GM12878 (cell line): ENCODE measurements at regions of chr16 and their contacts with region 1.

Region 1: GRCh38 chr16:65117811-65118448 is 3.9 kb downstream of the CDH11 start:
- DNase-seq: peak; percentile 2
- ATAC-seq: peak; percentile 88
- H3K4me3 ChIP-seq: no peak overlapping the region
- H3K27ac ChIP-seq: no peak overlapping the region
- H3K4me1 ChIP-seq: no peaks in the 10 kb centered on the region
- H3K27me3 ChIP-seq: no peaks in the 10 kb centered on the region; a peak in 2 of 4 replicates
- CTCF ChIP-seq: peak; percentile 91 to 94 (median 92)
- EP300 ChIP-seq: no peak
- POLR2A ChIP-seq: no peak
- RAD21 ChIP-seq: peak; percentile 89

Region 2: GRCh38 chr16:64089697-64090096 is 1028.2 kb before region 1 on chr16:
- CTCF ChIA-PET with region 1: interaction called, 3 read pairs
- POLR2A ChIA-PET with region 1: no interaction called
- RAD21 ChIA-PET with region 1: no interaction called
- SMC1A ChIA-PET with region 1: no interaction called
- in situ Hi-C with region 1: loop called (anchors 25 kb)
- intact Hi-C with region 1: loop called (anchors 5 kb)
- DNase-seq: no peak
- ATAC-seq: peak; percentile 66
- H3K4me3 ChIP-seq: no peak overlapping the region
- H3K27ac ChIP-seq: no peak overlapping the region
- H3K4me1 ChIP-seq: no peaks in the 10 kb centered on the region
- H3K27me3 ChIP-seq: no peaks in the 10 kb centered on the region
- CTCF ChIP-seq: peak in 2 of 3 experiments; percentile 24 to 38; a peak in 3 of 6 replicates
- EP300 ChIP-seq: no peak
- POLR2A ChIP-seq: no peak
- RAD21 ChIP-seq: peak; percentile 22; the same call in 1 of the 2 replicates

Region 3: GRCh38 chr16:64892835-64893785 is 224.8 kb before region 1 on chr16:
- CTCF ChIA-PET with region 1: no interaction called
- POLR2A ChIA-PET with region 1: no interaction called
- RAD21 ChIA-PET with region 1: no interaction called
- SMC1A ChIA-PET with region 1: no interaction called
- in situ Hi-C with region 1: no loop called
- intact Hi-C with region 1: loop called (anchors 10 kb)
- DNase-seq: no peak
- ATAC-seq: no peak
- H3K4me3 ChIP-seq: no peak overlapping the region
- H3K27ac ChIP-seq: no peak overlapping the region
- H3K4me1 ChIP-seq: no peaks in the 10 kb centered on the region
- H3K27me3 ChIP-seq: no peaks in the 10 kb centered on the region
- CTCF ChIP-seq: no peak
- EP300 ChIP-seq: no peak
- POLR2A ChIP-seq: no peak
- RAD21 ChIP-seq: no peak